Activated CD4-positive, alpha-beta memory T cell treated with anti-CD3 and anti-CD28 coated beads, Interleukin-2, amount 10 ng/mL, durations not matched to agents 7 days and 5 days (primary cell): ENCODE measurements at regions of chr12 and their contacts with region 1.

Region 1: GRCh38 chr12:47779301-47779942 is 6.4 kb downstream of the SLC48A1 start:
- DNase-seq: peak; percentile 92
- H3K4me3 Mint-ChIP-seq: peak overlapping the region; percentile 24
- H3K27ac Mint-ChIP-seq: peak overlapping the region; percentile 65
- H3K4me1 Mint-ChIP-seq: peaks cover 49% of the 10 kb centered on the region
- H3K27me3 Mint-ChIP-seq: no peaks in the 10 kb centered on the region

Region 2: GRCh38 chr12:47767216-47767724 is 12.2 kb before region 1 on chr12:
- CTCF ChIA-PET with region 1: interaction called, 43 read pairs
- POLR2A ChIA-PET with region 1: interaction called, 7 read pairs
- DNase-seq: peak; percentile 80
- H3K4me3 Mint-ChIP-seq: no peak overlapping the region
- H3K27ac Mint-ChIP-seq: no peak overlapping the region
- H3K4me1 Mint-ChIP-seq: peaks cover 3% of the 10 kb centered on the region
- H3K27me3 Mint-ChIP-seq: peaks cover 10% of the 10 kb centered on the region

Region 3: GRCh38 chr12:47797441-47797840 is 18.0 kb after region 1 on chr12:
- CTCF ChIA-PET with region 1: interaction called, 9 read pairs
- POLR2A ChIA-PET with region 1: interaction called, 11 read pairs
- DNase-seq: peak; percentile 46
- H3K4me3 Mint-ChIP-seq: no peak overlapping the region
- H3K27ac Mint-ChIP-seq: peak overlapping the region; percentile 49
- H3K4me1 Mint-ChIP-seq: peaks cover 31% of the 10 kb centered on the region
- H3K27me3 Mint-ChIP-seq: no peaks in the 10 kb centered on the region

Region 4: GRCh38 chr12:47828608-47829536 is 49.5 kb after region 1 on chr12:
- CTCF ChIA-PET with region 1: interaction called, 284 read pairs
- POLR2A ChIA-PET with region 1: interaction called, 55 read pairs
- DNase-seq: no peak
- H3K4me3 Mint-ChIP-seq: no peak overlapping the region
- H3K27ac Mint-ChIP-seq: peak overlapping the region; percentile 70
- H3K4me1 Mint-ChIP-seq: peaks cover 89% of the 10 kb centered on the region
- H3K27me3 Mint-ChIP-seq: no peaks in the 10 kb centered on the region

Region 5: DNA sequence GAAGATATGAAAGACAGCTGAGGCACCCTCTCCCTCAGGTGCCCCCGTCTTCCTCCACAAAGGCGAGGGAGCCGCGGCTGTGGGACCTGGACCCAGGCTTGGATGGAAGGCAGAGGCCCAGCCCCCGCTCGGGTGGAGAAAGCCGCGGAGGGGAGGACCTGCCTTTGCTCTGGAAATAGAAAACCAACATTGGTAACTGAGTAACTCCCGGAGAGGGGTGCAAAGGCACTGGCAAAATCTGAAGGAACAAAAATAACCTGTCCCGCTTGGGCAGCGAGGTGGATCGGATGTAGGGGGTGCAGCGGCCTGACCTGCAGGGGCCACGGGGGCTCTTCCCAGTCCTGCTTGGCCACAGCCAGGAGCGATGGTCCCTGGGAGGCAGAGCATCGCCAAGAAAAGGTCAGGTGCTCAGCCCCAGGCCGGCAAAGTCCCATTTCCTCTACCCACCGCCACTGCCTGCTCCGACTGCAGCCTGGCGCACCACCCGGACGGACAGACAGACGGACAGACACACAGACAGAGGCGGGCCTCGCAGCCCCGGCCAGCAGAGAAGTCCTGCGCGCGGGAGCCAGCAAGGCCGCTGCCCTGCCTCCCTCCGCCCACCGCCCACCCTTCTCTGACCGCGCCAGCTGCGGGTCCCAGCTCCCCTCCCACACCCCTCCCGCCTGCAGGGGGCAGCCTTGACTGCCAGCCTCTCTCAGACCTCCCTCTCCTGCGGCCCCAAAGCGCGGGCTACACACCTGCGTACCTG is 162.6 kb after region 1 on chr12:
- CTCF ChIA-PET with region 1: no interaction called
- POLR2A ChIA-PET with region 1: no interaction called
- DNase-seq: peak; percentile 42
- H3K4me3 Mint-ChIP-seq: no peak overlapping the region
- H3K27ac Mint-ChIP-seq: no peak overlapping the region
- H3K4me1 Mint-ChIP-seq: peaks cover 5% of the 10 kb centered on the region
- H3K27me3 Mint-ChIP-seq: peaks cover 32% of the 10 kb centered on the region

Region 6: GRCh38 chr12:48334808-48335207 is 555.4 kb after region 1 on chr12:
- CTCF ChIA-PET with region 1: no interaction called
- POLR2A ChIA-PET with region 1: no interaction called
- DNase-seq: no peak
- H3K4me3 Mint-ChIP-seq: no peak overlapping the region
- H3K27ac Mint-ChIP-seq: no peak overlapping the region
- H3K4me1 Mint-ChIP-seq: no peaks in the 10 kb centered on the region
- H3K27me3 Mint-ChIP-seq: peaks cover 1% of the 10 kb centered on the region